BJ (cell line): ENCODE measurements at regions of chr2 and their contacts with region 1.

Region 1: GRCh38 chr2:126527836-126528507 is 128.0 kb upstream of the GYPC start:
- DNase-seq: no peak
- H3K4me3 ChIP-seq: no peak overlapping the region
- H3K27me3 ChIP-seq: no peaks in the 10 kb centered on the region
- CTCF ChIP-seq: peak; percentile 56

Region 2: DNA sequence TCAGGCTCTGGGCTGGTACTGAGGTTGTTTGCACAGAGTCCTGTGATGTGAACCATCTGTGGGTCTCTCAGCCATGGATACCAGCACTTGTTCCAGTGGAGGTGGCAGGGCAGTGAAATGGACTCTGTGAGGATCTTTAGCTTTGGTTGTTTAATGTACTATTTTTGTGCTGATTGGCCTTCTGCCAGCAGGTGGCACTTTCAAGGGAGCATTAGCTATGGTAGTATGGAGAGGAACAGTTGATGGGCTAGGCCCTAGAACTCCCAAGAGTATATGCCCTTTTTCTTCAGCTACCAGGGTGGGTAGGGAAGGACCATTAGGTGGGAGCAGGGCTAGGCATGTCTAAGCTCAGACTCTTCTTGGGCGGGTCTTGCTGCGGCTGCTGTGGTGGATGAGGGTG is 129.0 kb before region 1 on chr2:
- CTCF ChIA-PET with region 1: no interaction called
- POLR2A ChIA-PET with region 1: no interaction called
- DNase-seq: no peak
- H3K4me3 ChIP-seq: no peak overlapping the region
- H3K27me3 ChIP-seq: no peaks in the 10 kb centered on the region
- CTCF ChIP-seq: no peak

Region 3: GRCh38 chr2:126736133-126736874 is 208.3 kb after region 1 on chr2:
- CTCF ChIA-PET with region 1: no interaction called
- POLR2A ChIA-PET with region 1: no interaction called
- DNase-seq: no peak
- H3K4me3 ChIP-seq: no peak overlapping the region
- H3K27me3 ChIP-seq: no peaks in the 10 kb centered on the region
- CTCF ChIP-seq: no peak

Region 4: DNA sequence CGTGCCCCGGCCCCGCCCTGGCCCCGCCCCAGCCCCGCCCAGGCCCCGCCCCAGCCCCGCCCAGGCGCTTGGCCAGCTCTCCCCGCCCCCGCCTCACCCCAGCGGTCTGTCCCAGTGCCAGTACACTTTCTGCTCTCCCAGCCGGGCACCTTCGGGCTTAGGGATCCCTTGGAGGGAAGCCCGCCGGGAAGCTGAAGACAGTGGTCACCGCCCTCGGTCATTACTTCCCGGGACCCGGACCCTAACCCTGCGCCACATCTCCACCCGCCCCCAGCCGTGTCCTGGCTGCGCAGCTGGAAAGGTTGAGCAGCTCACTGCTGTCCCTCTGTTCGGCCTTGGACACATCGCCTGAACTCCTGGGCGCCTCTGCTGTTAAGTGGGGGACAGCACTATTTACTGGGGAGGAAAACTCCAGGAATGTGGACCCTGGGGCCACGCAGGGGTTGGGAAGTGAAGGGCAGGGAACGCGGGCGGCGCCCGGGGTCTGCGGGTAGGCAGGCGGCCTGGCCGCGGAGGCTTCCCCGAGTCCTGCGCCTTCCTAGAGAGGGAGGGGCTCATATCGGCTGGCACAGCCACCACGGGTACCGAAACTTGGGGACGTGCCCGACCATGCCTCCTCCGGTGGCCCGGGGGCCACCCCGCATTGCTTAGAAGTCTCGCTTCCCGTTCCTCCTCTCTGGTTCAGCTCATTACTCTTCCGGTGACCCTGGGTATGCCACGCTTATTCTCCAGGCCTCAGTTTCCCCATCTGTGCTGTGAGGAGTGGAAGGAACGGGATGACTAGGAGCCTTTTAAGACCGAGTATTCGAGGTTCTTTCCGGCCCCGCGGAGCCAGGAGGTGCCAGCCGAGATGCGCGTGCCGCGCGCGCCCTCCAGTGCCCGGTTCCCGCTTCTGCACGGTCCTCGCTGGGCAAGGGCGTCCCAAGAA is 249.0 kb after region 1 on chr2:
- CTCF ChIA-PET with region 1: interaction called, 59 read pairs
- POLR2A ChIA-PET with region 1: no interaction called
- DNase-seq: no peak
- H3K4me3 ChIP-seq: peak overlapping the region; percentile 43
- H3K27me3 ChIP-seq: peaks cover 4% of the 10 kb centered on the region
- CTCF ChIP-seq: peak; percentile 98